ENCODE measurements at regions of chr15 and their contacts with region 1.

Region 1: GRCh38 chr15:48627260-48627960 is 18.1 kb downstream of the FBN1 start:
- DNase-seq: no peak
- H3K4me3 Mint-ChIP-seq: no peak overlapping the region
- H3K27ac Mint-ChIP-seq: no peak overlapping the region
- H3K4me1 Mint-ChIP-seq: no peaks in the 10 kb centered on the region
- H3K27me3 Mint-ChIP-seq: no peaks in the 10 kb centered on the region
- CTCF ChIP-seq: no peak

Region 2: GRCh38 chr15:48570822-48571221 is 56.6 kb before region 1 on chr15:
- CTCF ChIA-PET with region 1: no interaction called
- intact Hi-C with region 1: loop called (anchors 5 kb)
- DNase-seq: no peak
- H3K4me3 Mint-ChIP-seq: no peak overlapping the region
- H3K27ac Mint-ChIP-seq: no peak overlapping the region
- H3K4me1 Mint-ChIP-seq: no peaks in the 10 kb centered on the region
- H3K27me3 Mint-ChIP-seq: no peaks in the 10 kb centered on the region
- CTCF ChIP-seq: no peak

Region 3: GRCh38 chr15:48842501-48842900 is 215.1 kb after region 1 on chr15:
- CTCF ChIA-PET with region 1: no interaction called
- intact Hi-C with region 1: no loop called
- DNase-seq: no peak
- H3K4me3 Mint-ChIP-seq: no peak overlapping the region
- H3K27ac Mint-ChIP-seq: no peak overlapping the region
- H3K4me1 Mint-ChIP-seq: no peaks in the 10 kb centered on the region
- H3K27me3 Mint-ChIP-seq: no peaks in the 10 kb centered on the region
- CTCF ChIP-seq: no peak

Measured in Calu3 (cell line).